ENCODE measurements at regions of chr17 and their contacts with region 1.

Region 1: DNA sequence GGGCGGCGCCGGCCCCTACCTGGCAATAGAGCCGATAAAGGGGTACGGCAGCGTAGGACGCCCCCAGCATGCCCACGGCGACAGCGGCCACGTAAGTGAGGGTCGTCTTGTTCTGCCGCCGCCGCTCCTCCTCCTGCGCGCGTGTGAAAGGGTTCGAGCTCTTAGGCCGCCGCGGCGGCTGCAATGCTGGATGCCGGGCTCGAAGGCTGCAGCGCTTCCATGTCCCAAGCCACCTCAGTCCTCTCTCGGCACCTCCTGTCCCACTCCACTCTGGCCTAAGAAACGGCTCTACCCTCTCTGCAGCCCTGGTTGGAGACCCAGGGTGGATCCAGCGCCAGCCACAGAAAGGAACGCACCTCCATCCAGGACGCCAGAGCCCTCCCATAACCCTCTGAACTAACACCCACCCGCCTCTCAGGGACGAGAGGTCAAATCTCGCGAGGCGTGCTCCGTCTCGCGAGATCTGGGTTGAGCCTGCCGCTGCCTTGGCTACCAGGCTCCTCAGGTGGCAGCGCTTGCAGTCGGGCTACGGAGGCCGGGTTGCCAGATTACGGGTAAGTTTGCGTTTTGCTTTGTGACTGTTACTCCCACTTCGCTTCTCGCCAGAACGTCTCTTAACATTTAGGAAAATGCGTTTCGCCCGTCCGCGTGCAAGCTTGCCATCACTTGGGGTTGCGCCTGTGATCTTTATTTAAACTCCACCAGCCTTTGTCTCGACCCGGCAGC is at the starts of genes COX11 and STXBP4:
- DNase-seq: peak; percentile 85 to 98 (median 93)
- ATAC-seq: peak; percentile 96
- H3K4me3 ChIP-seq: peak within 1 kb of the TSS; percentile 65 to 88
- H3K4me3 Mint-ChIP-seq: no peak within 1 kb of the TSS
- H3K27ac ChIP-seq: peak within 1 kb of the TSS; percentile 70 to 78
- H3K27ac Mint-ChIP-seq: no peak within 1 kb of the TSS
- H3K4me1 ChIP-seq: peaks cover 21% of the 10 kb centered on the region
- H3K4me1 Mint-ChIP-seq: peaks cover 33% of the 10 kb centered on the region
- H3K27me3 ChIP-seq: no peaks in the 10 kb centered on the region
- H3K27me3 Mint-ChIP-seq: no peaks in the 10 kb centered on the region
- CTCF ChIP-seq: no peak
- total RNA-seq, gene COX11: 26.2 to 27.4 TPM
- total RNA-seq, gene STXBP4: 3.0 to 4.0 TPM

Region 2: GRCh38 chr17:55410722-55411462 is 442.5 kb after region 1 on chr17:
- CTCF ChIA-PET with region 1: no interaction called
- POLR2A ChIA-PET with region 1: no interaction called
- intact Hi-C with region 1: loop called in 1 of 2 experiments (anchors 5 kb)
- DNase-seq: no peak
- ATAC-seq: no peak
- H3K4me3 ChIP-seq: no peak overlapping the region
- H3K4me3 Mint-ChIP-seq: no peak overlapping the region
- H3K27ac ChIP-seq: no peak overlapping the region
- H3K27ac Mint-ChIP-seq: no peak overlapping the region
- H3K4me1 ChIP-seq: peaks cover 19% of the 10 kb centered on the region
- H3K4me1 Mint-ChIP-seq: peaks cover 18% of the 10 kb centered on the region
- H3K27me3 ChIP-seq: no peaks in the 10 kb centered on the region
- H3K27me3 Mint-ChIP-seq: no peaks in the 10 kb centered on the region
- CTCF ChIP-seq: no peak

Measured in CD8-positive, alpha-beta T cell (primary cell).